ENCODE measurements at regions of chr2 and their contacts with region 1.

Region 1: GRCh38 chr2:9638532-9638931 is 7.7 kb upstream of the YWHAQ start:
- DNase-seq: peak; percentile 97
- ATAC-seq: peak; percentile 91
- H3K4me3 ChIP-seq: no peak overlapping the region
- H3K27ac ChIP-seq: peak overlapping the region; percentile 69
- H3K4me1 ChIP-seq: peaks cover 24% of the 10 kb centered on the region
- H3K27me3 ChIP-seq: no peaks in the 10 kb centered on the region
- CTCF ChIP-seq: no peak
- POLR2A ChIP-seq: no peak
- RAD21 ChIP-seq: peak; percentile 23; the same call in 1 of the 2 replicates

Region 2: DNA sequence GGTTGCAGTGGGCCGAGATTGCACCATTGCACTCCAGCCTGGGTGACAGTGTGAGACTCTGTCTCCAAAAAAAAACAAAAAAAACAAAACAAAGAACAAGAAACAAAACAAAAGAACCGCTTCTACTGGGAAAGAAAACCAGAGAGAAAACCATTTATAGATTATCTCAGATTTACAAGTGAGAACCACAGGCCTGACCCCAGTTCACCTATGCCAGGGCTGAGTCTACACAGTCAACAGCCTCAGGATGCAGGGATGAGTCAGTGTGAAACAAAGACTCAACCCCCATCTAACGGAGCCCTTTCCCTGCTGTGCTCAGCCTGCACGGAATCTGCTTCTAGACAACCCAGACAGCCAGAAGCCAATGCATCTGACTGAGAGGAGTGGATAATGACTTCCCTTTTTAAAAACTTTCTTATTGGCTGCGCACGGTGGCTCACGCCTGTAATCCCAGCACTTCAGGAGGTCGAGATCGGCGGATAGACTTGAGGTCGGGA is 17.8 kb after region 1 on chr2:
- CTCF ChIA-PET with region 1: interaction called, 3 read pairs
- POLR2A ChIA-PET with region 1: no interaction called
- dilution Hi-C with region 1: no loop called
- in situ Hi-C with region 1: no loop called
- intact Hi-C with region 1: loop called (anchors 1 kb)
- DNase-seq: peak; percentile 97
- ATAC-seq: peak; percentile 87
- H3K4me3 ChIP-seq: no peak overlapping the region
- H3K27ac ChIP-seq: peak overlapping the region; percentile 67
- H3K4me1 ChIP-seq: peaks cover 20% of the 10 kb centered on the region
- H3K27me3 ChIP-seq: no peaks in the 10 kb centered on the region
- CTCF ChIP-seq: no peak
- POLR2A ChIP-seq: no peak
- RAD21 ChIP-seq: peak; percentile 47

Region 3: DNA sequence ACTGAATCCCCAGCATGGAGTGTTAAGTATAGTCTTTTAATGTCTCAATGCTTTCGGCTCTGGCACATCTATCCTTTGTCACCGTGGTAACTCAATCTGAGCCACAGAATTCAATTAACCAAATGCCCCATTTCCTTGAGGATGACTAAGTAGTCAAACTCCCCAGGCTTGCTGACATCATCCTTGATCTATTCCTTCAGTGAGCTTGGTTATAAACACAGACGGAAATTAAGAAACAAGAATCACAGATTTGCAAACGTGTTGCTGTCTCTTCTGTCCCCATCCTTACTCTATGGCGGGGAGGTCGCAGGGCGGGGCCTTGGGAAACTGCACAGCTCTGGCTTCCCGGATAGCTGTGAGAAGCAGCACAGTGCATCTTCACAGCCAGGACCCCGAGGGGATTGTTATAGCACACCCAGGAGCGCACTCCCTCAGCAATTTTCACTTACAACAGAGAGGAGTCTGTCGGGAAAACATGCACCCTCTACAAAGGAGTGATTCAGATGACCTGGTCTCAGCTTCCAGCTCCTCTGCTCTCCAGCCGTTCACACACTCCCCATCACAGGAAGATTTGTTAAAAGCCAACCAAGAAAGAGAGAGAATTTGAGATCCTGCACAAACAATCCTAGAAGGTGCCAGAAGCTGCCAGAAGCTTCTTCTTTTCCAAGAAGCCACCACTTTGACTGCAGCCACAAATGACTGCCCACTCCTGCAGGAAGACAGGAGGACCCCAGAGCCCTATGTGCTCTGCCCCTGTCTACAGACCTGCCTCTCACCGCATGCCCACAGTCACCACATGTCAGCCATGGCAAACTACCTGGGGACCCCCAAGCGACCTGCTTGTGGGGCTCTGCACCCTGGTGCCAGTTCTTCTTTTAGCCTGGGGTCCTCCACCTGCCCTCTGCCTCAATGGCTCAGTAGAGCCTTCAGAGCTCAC is 37.2 kb after region 1 on chr2:
- CTCF ChIA-PET with region 1: interaction called, 4 read pairs
- POLR2A ChIA-PET with region 1: no interaction called
- dilution Hi-C with region 1: no loop called
- in situ Hi-C with region 1: no loop called
- intact Hi-C with region 1: loop called (anchors 5 kb)
- DNase-seq: peak; percentile 96
- ATAC-seq: peak; percentile 93
- H3K4me3 ChIP-seq: peak overlapping the region; percentile 33
- H3K27ac ChIP-seq: peak overlapping the region; percentile 76
- H3K4me1 ChIP-seq: peaks cover 10% of the 10 kb centered on the region
- H3K27me3 ChIP-seq: no peaks in the 10 kb centered on the region
- CTCF ChIP-seq: no peak
- POLR2A ChIP-seq: no peak
- RAD21 ChIP-seq: peak; percentile 4; the same call in 1 of the 2 replicates

Region 4: DNA sequence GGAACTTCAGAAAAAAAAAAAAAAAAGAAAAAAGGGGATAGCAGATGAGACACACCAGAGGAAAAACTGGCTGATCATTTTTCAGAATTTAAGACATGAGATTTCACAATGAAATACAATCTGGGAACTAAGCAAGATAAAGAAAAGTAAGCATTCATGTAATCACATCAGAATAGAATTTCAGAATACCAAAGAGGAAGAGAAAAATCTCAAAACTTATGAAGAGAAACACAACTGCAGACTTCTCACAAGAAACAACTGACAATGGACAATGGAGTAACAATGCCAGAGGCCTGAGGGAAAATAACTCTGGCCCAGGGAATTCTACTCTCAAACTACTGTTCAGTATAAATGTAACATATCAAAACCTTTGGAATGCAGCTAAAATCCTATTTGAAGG is 470.8 kb after region 1 on chr2:
- CTCF ChIA-PET with region 1: no interaction called
- POLR2A ChIA-PET with region 1: no interaction called
- dilution Hi-C with region 1: no loop called
- in situ Hi-C with region 1: no loop called
- intact Hi-C with region 1: no loop called
- DNase-seq: no peak
- ATAC-seq: no peak
- H3K4me3 ChIP-seq: no peak overlapping the region
- H3K27ac ChIP-seq: no peak overlapping the region
- H3K4me1 ChIP-seq: no peaks in the 10 kb centered on the region; the same call in 1 of the 2 replicates
- H3K27me3 ChIP-seq: no peaks in the 10 kb centered on the region
- CTCF ChIP-seq: no peak
- POLR2A ChIP-seq: no peak
- RAD21 ChIP-seq: no peak